Gastrocnemius medialis (tissue), 4 donors: ENCODE measurements at regions of chr3 and their contacts with region 1.

Region 1: DNA sequence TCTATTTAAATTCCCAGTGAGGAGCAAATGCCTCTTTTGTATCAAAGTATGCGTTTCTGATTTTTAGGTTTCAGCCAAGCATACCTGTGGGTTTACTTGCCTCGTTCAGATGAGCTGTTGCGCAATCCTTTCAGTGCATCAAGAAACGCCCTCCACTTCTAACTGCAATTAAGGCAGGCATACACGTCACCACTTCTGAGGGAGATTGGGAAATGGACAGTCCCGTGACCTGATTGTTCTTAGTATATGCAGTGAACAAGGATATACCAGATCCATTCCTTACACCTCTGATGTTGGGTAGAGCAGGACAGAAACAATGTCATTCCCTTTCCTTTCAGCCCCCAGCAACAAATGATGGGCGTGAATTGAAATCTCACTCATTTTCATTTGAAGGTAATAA is 219.0 kb downstream of the ITPR1 start:
- DNase-seq: no peak
- ATAC-seq: no peak
- H3K4me3 ChIP-seq: no peak overlapping the region
- H3K27ac ChIP-seq: no peak overlapping the region
- H3K4me1 ChIP-seq: peaks cover 6 to 9% of the 10 kb centered on the region in 2 donors
- H3K27me3 ChIP-seq: no peaks in the 10 kb centered on the region
- CTCF ChIP-seq: no peak
- POLR2A ChIP-seq: no peak

Region 2: DNA sequence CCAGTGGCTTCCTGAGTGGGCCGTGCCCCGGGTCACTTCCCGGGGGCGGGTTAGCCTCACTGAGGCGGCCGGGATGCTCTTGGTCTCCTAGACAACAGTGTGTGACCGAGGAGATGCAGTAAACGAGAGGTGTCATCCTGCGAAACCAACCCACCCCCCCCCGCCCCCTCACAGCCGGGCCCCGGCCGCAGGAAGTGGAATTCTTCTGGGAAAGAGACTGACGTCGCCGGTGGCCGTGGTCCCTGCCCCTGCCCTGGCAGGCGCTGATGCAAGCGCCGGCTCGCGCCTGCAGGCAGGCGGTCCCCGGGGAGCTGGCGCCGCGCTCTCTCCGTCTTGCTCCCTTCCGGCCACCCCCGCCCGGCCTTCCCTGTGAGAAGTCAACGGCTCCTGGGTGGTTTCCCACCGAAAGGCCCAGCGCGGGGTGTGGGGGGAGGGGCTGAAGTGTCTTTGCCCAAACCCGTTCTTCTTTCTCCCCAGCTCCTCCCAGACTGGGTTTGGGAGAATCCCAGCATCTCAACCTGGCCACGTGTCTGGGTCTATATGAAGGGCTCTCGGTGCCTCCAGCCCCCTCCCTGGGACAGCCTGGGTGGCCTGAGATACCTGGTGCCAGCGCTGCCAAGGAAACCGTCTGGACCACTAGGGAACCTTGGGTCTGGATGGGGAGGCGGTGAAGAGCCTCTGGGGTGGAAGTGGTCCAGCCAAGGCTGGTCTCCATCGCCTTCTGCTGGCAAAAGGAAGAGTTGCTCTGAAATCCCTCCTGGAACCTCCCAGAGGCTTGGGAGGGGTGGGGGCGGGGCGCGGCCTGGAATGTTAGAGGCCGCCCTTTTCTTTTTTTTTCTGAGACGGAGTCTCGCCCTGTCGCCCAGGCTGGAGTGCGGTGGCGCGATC is 314.4 kb after region 1 on chr3:
- in situ Hi-C with region 1: loop called in 1 of 4 experiments (anchors 10 kb)
- intact Hi-C with region 1: no loop called
- DNase-seq: peak; percentile 70 to 88
- ATAC-seq: peak; percentile 90
- H3K4me3 ChIP-seq: peak overlapping the region; percentile 59 to 84 (median 63)
- H3K27ac ChIP-seq: peak overlapping the region; percentile 74 to 89 (median 82)
- H3K4me1 ChIP-seq: peaks cover 9% of the 10 kb centered on the region in 2 donors
- H3K27me3 ChIP-seq: no peaks in the 10 kb centered on the region
- CTCF ChIP-seq: peak; percentile 57 to 84 (median 76)
- POLR2A ChIP-seq: peak; percentile 26 to 30

Region 3: GRCh38 chr3:5071061-5071460 is 358.9 kb after region 1 on chr3:
- in situ Hi-C with region 1: no loop called
- intact Hi-C with region 1: loop called (anchors 5 kb)
- DNase-seq: no peak
- ATAC-seq: no peak
- H3K4me3 ChIP-seq: no peak overlapping the region
- H3K27ac ChIP-seq: no peak overlapping the region
- H3K4me1 ChIP-seq: peaks cover 9 to 10% of the 10 kb centered on the region in 2 donors
- H3K27me3 ChIP-seq: no peaks in the 10 kb centered on the region
- CTCF ChIP-seq: no peak
- POLR2A ChIP-seq: no peak

Region 4: DNA sequence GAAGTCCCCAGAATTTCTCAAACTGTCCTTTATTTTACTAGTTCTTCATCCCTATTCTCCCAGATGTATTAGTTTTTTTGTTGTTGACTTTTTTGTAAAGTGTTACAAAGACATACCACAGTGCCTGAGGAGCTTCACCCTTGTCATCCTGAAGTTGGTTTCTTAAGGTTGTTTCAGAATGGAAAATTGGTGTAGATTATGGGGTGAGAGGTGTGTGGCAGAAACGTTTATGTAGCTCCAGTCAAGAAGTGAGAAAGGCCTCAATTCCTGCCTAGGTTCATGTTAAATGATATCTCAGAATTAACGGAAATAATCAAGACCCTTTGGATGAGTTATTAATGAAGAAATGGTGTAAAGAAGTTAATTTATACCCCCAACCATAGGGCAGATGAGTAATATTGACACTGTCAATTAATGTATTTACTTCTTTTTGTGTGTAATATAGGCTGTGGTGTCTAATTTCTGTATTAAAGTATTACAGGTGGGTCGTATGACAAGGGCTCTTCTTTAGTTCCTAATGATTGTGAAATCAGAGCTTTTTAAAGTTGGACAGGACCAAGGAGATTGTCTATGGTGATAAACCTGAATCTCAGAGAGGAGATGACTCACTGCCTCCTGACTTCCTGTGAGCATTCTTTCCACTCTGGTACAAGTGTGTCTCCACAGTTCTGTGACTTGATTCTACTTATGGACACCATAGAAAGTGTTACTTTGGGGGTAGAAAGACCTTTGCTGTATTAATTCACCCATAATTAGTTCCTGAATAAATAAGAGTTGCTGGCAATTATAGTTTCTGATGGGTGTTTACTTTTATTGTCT is 482.4 kb after region 1 on chr3:
- in situ Hi-C with region 1: no loop called
- intact Hi-C with region 1: loop called (anchors 10 kb)
- DNase-seq: peak; percentile 69 to 70
- ATAC-seq: peak; percentile 97 to 98
- H3K4me3 ChIP-seq: no peak overlapping the region
- H3K27ac ChIP-seq: peak overlapping the region; percentile 79 to 88 (median 82)
- H3K4me1 ChIP-seq: peaks cover 49 to 51% of the 10 kb centered on the region in 2 donors
- H3K27me3 ChIP-seq: no peaks in the 10 kb centered on the region
- CTCF ChIP-seq: no peak
- POLR2A ChIP-seq: peak in 1 of 2 donors; percentile 39